PC-3 (cell line): ENCODE measurements at regions of chr4 and their contacts with region 1.

Region 1: GRCh38 chr4:123750044-123750443 is 353.4 kb downstream of the SPRY1 start:
- DNase-seq: peak; percentile 20
- ATAC-seq: no peak
- H3K4me3 ChIP-seq: no peak overlapping the region
- H3K27ac ChIP-seq: no peak overlapping the region
- H3K4me1 ChIP-seq: peaks cover 6% of the 10 kb centered on the region; the same call in 1 of the 2 replicates
- H3K27me3 ChIP-seq: no peaks in the 10 kb centered on the region
- CTCF ChIP-seq: no peak

Region 2: DNA sequence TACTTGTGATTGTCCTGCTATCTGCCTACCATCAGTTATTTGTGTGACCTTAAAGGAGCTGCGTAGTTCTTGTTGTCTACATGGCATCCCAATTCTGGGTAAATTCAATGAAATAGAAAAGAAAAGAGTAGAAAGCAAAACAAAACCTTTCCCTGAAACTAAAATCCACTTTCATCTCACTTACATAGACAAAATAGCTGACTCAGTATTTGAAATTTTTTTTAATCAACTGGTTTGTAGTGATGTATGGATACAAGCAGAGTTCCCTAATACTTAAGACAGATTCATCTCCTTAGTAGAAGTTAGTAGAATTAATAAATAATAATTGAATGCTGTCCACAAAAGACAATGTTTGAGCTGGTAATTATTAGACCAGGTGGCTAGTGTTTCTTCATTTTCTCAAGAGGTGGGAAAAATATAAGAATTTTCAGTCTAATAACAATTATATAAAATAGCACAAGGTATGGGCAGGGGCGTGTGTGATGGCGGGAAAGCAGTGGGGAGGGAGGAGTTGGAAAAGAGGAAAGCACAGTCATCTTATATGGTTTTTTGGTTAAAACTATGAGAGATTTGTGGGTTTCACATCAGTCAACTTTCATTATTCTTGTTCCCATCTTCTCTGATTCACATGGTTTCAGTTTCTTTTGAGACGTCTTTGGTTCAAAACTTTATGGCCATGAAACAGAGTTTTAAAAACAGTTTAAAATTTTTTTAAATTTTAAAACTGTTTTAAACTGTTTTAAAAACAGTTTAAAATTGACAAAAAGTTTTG is 78.2 kb before region 1 on chr4:
- CTCF ChIA-PET with region 1: no interaction called
- POLR2A ChIA-PET with region 1: no interaction called
- intact Hi-C with region 1: loop called (anchors 10 kb)
- DNase-seq: no peak
- ATAC-seq: no peak
- H3K4me3 ChIP-seq: no peak overlapping the region
- H3K27ac ChIP-seq: no peak overlapping the region
- H3K4me1 ChIP-seq: peaks cover 32% of the 10 kb centered on the region
- H3K27me3 ChIP-seq: no peaks in the 10 kb centered on the region
- CTCF ChIP-seq: no peak

Region 3: DNA sequence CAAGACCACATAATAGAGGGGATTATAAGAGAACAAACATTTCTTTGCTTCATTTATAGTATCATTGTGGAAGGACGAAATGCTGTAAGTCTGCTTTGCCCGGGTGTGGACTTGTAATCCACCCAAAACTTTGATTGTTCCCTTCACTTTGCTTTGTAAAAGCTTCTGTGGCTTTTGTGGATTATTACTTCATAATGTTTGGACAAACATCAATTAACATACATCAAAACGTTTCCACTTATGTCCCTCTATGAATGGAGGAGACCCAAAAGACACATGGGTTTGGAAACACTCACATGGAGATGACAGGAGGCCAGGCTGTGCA is 62.0 kb after region 1 on chr4:
- CTCF ChIA-PET with region 1: no interaction called
- POLR2A ChIA-PET with region 1: no interaction called
- intact Hi-C with region 1: no loop called
- DNase-seq: no peak
- ATAC-seq: no peak
- H3K4me3 ChIP-seq: no peak overlapping the region
- H3K27ac ChIP-seq: no peak overlapping the region
- H3K4me1 ChIP-seq: no peaks in the 10 kb centered on the region; the same call in 1 of the 2 replicates
- H3K27me3 ChIP-seq: no peaks in the 10 kb centered on the region
- CTCF ChIP-seq: no peak